Caco-2 (cell line): ENCODE measurements at regions of chr13 and their contacts with region 1.

Region 1: GRCh38 chr13:99269627-99270241 is 11.6 kb upstream of the GPR18 start:
- DNase-seq: peak in 1 of 2 experiments; percentile 15
- H3K4me3 ChIP-seq: no peak overlapping the region
- H3K4me3 Mint-ChIP-seq: no peak overlapping the region
- H3K27ac Mint-ChIP-seq: no peak overlapping the region
- H3K4me1 ChIP-seq: no peaks in the 10 kb centered on the region
- H3K4me1 Mint-ChIP-seq: no peaks in the 10 kb centered on the region
- H3K27me3 ChIP-seq: no peaks in the 10 kb centered on the region
- H3K27me3 Mint-ChIP-seq: no peaks in the 10 kb centered on the region
- CTCF ChIP-seq: peak in 1 of 2 experiments; percentile 58

Region 2: DNA sequence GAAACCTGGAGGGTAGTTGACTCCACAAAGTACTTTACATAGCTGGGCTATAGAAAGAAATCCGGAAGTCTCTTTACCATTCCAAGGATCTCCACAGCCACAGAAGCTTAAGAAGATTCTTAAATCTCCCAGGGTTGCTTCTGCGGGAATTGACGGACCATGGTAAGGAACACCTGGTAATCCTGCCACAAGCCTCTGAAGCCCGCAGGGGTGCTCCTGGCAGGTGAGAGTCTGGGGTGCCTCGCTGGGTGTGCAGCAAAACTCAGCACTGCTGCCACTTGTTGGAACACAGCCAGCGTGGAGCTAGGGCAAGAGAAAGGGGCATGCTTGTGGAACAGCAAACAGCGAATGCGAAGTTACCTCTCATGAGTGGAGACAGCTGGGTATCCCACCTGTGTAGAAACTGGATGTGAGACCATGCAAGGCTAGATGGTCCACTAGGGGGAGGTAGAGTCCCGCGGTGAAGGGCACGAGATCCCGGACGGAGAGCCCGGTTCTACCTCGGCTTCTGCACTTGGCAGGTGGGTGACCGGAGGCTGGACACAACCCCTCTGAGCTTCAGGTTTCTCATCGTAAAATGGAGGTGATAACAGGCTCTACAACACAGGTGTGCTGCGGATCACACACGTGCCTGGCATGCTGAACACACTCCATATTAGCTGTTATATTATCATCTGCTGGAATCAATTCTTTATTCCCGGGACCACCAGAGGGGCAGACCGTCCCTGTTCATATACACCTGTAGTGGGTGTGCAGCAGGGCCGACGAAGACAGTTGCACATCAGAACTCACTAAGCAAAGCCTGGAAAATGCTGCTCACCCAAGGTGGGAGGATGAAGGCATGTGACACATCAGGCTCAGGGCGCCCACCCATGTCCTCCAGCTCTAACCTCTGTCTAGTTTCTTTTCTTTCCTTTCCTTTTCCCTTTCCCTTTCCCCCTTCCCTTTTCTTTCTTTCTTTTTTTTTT is 93.1 kb before region 1 on chr13:
- CTCF ChIA-PET with region 1: interaction called, 23 read pairs
- POLR2A ChIA-PET with region 1: no interaction called
- intact Hi-C with region 1: loop called (anchors 1 kb)
- DNase-seq: peak; percentile 83 to 90
- H3K4me3 ChIP-seq: no peak overlapping the region
- H3K4me3 Mint-ChIP-seq: no peak overlapping the region
- H3K27ac Mint-ChIP-seq: no peak overlapping the region
- H3K4me1 ChIP-seq: peaks cover 5% of the 10 kb centered on the region; the same call in 1 of the 2 replicates
- H3K4me1 Mint-ChIP-seq: no peaks in the 10 kb centered on the region
- H3K27me3 ChIP-seq: no peaks in the 10 kb centered on the region
- H3K27me3 Mint-ChIP-seq: no peaks in the 10 kb centered on the region
- CTCF ChIP-seq: peak; percentile 96

Region 3: GRCh38 chr13:99200432-99201167 is 69.1 kb before region 1 on chr13 and contains the start of gene UBAC2:
- CTCF ChIA-PET with region 1: interaction called, 15 read pairs
- POLR2A ChIA-PET with region 1: interaction called, 4 read pairs
- intact Hi-C with region 1: loop called (anchors 1 kb)
- DNase-seq: peak; percentile 93 to 97
- H3K4me3 ChIP-seq: peak within 1 kb of the TSS; percentile 89
- H3K4me3 Mint-ChIP-seq: peak within 1 kb of the TSS; percentile 92
- H3K27ac Mint-ChIP-seq: peak within 1 kb of the TSS; percentile 85
- H3K4me1 ChIP-seq: peaks cover 19% of the 10 kb centered on the region
- H3K4me1 Mint-ChIP-seq: peaks cover 24% of the 10 kb centered on the region
- H3K27me3 ChIP-seq: no peaks in the 10 kb centered on the region
- H3K27me3 Mint-ChIP-seq: no peaks in the 10 kb centered on the region
- CTCF ChIP-seq: peak in 1 of 2 experiments; percentile 18
- total RNA-seq, gene UBAC2: 91.3 and 103 TPM in 2 replicates

Region 4: GRCh38 chr13:99237981-99238662 is 31.6 kb before region 1 on chr13:
- CTCF ChIA-PET with region 1: interaction called, 12 read pairs
- POLR2A ChIA-PET with region 1: no interaction called
- intact Hi-C with region 1: no loop called
- DNase-seq: no peak
- H3K4me3 ChIP-seq: no peak overlapping the region
- H3K4me3 Mint-ChIP-seq: no peak overlapping the region
- H3K27ac Mint-ChIP-seq: no peak overlapping the region
- H3K4me1 ChIP-seq: no peaks in the 10 kb centered on the region
- H3K4me1 Mint-ChIP-seq: peaks cover 6% of the 10 kb centered on the region
- H3K27me3 ChIP-seq: no peaks in the 10 kb centered on the region
- H3K27me3 Mint-ChIP-seq: no peaks in the 10 kb centered on the region
- CTCF ChIP-seq: no peak

Region 5: GRCh38 chr13:99356158-99357091 is 86.7 kb after region 1 on chr13:
- CTCF ChIA-PET with region 1: no interaction called
- POLR2A ChIA-PET with region 1: no interaction called
- intact Hi-C with region 1: no loop called
- DNase-seq: no peak
- H3K4me3 ChIP-seq: no peak overlapping the region
- H3K4me3 Mint-ChIP-seq: no peak overlapping the region
- H3K27ac Mint-ChIP-seq: no peak overlapping the region
- H3K4me1 ChIP-seq: no peaks in the 10 kb centered on the region
- H3K4me1 Mint-ChIP-seq: peaks cover 7% of the 10 kb centered on the region
- H3K27me3 ChIP-seq: no peaks in the 10 kb centered on the region
- H3K27me3 Mint-ChIP-seq: no peaks in the 10 kb centered on the region
- CTCF ChIP-seq: no peak